ENCODE measurements at regions of chr9 and their contacts with region 1.

Region 1: DNA sequence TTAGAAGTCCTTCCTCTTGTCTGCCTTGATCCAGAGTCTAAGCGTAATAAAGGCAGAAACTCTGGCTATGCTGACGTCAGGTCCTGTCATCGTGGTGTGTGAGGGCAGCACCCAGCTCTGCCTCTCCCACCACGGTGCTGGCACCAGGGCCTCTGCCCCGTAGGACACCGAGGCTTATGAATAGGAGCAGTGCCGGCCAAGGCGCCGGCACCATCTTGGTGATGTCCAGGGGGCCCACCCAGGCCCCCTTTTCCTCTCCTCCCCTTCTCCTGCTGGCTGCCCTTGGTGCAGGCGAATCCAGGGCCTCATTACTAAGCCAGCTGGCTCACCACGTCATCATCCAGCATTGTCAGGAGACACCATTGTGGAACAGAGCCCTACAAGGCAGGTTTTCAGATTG is 252.3 kb downstream of the FANCC start:
- DNase-seq: no peak
- ATAC-seq: no peak
- H3K4me3 ChIP-seq: no peak overlapping the region
- H3K27ac ChIP-seq: peak overlapping the region; percentile 91
- H3K4me1 ChIP-seq: peaks cover 93% of the 10 kb centered on the region
- H3K27me3 ChIP-seq: no peaks in the 10 kb centered on the region
- CTCF ChIP-seq: no peak
- EP300 ChIP-seq: no peak
- POLR2A ChIP-seq: no peak
- RAD21 ChIP-seq: no peak

Region 2: GRCh38 chr9:94961870-94962269 is 103.4 kb before region 1 on chr9:
- CTCF ChIA-PET with region 1: no interaction called
- POLR2A ChIA-PET with region 1: no interaction called
- in situ Hi-C with region 1: no loop called
- intact Hi-C with region 1: no loop called
- DNase-seq: no peak
- ATAC-seq: no peak
- H3K4me3 ChIP-seq: no peak overlapping the region
- H3K27ac ChIP-seq: no peak overlapping the region
- H3K4me1 ChIP-seq: peaks cover 19% of the 10 kb centered on the region
- H3K27me3 ChIP-seq: no peaks in the 10 kb centered on the region
- CTCF ChIP-seq: no peak
- EP300 ChIP-seq: no peak
- POLR2A ChIP-seq: no peak
- RAD21 ChIP-seq: no peak

Region 3: GRCh38 chr9:95025213-95026147 is 39.7 kb before region 1 on chr9:
- CTCF ChIA-PET with region 1: no interaction called
- POLR2A ChIA-PET with region 1: interaction called, 52 read pairs
- in situ Hi-C with region 1: no loop called
- intact Hi-C with region 1: loop called (anchors 2 kb)
- DNase-seq: peak; percentile 80
- ATAC-seq: peak; percentile 46
- H3K4me3 ChIP-seq: 0 out of 6 replicates have a peak overlapping the region, but pooled peaks of 1 of the 3 experiments have one; percentile 47
- H3K27ac ChIP-seq: peak overlapping the region; percentile 94
- H3K4me1 ChIP-seq: peaks cover 100% of the 10 kb centered on the region
- H3K27me3 ChIP-seq: no peaks in the 10 kb centered on the region
- CTCF ChIP-seq: peak; percentile 44
- EP300 ChIP-seq: peak; percentile 28 to 35; a peak in 1 of 4 replicates
- POLR2A ChIP-seq: 0 out of 4 replicates have a peak, but pooled peaks of 1 of the 2 experiments have one; percentile 13
- RAD21 ChIP-seq: 0 out of 2 replicates have a peak, but pooled peaks have one; percentile 40

Region 4: GRCh38 chr9:95031711-95032461 is 33.3 kb before region 1 on chr9:
- CTCF ChIA-PET with region 1: no interaction called
- POLR2A ChIA-PET with region 1: interaction called, 21 read pairs
- in situ Hi-C with region 1: no loop called
- intact Hi-C with region 1: loop called (anchors 2 kb)
- DNase-seq: peak; percentile 98
- ATAC-seq: peak; percentile 82
- H3K4me3 ChIP-seq: peak overlapping the region in 1 of 3 experiments; percentile 48; a peak in 2 of 6 replicates
- H3K27ac ChIP-seq: peak overlapping the region; percentile 85
- H3K4me1 ChIP-seq: peaks cover 76% of the 10 kb centered on the region
- H3K27me3 ChIP-seq: no peaks in the 10 kb centered on the region
- CTCF ChIP-seq: no peak
- EP300 ChIP-seq: peak in 1 of 2 experiments; percentile 97; a peak in 3 of 4 replicates
- POLR2A ChIP-seq: peak; percentile 16 to 21; a peak in 2 of 4 replicates
- RAD21 ChIP-seq: no peak

Region 5: DNA sequence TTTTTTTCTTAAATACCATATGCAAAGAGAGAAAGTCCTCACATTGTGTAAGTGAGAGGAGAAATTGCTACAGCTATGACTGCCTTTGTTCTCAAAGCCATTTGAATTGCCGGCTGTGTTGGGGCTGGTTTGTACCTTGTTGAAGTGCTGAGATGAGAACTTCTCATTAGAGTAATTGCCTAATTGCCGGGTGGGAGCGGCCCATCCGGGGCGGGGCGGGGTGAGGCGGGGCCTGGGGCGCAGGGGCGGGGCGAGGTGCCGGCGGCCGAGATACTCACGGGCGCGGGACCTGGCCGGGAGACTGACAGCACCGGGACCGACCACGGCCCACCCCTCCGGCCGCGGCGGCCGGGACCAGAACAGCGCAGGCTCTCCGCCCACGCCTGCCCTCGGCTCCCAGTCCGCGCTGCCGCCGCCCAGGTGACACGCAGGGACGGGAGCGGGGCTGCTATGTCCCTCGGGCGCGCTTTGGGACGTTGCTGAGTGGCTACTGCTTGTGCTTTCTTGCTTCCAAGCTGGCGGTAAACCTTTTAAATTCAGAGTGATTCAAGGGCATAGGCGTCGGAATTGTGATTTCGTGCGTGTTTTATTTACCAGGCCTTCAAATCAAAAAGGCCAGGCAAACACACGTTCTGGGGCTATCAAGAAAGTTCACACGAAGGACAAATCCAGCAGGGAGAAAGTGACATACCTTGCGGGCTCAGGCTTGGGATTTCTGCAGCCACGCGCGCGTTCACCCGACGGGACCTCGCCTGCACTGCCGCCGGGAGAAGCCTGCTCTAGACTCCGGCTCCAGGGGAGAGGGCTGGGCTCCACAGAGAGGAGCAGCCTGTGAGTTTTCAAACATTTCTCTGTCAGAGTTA is 16.8 kb before region 1 on chr9:
- CTCF ChIA-PET with region 1: no interaction called
- POLR2A ChIA-PET with region 1: interaction called, 12 read pairs
- in situ Hi-C with region 1: no loop called
- intact Hi-C with region 1: no loop called
- DNase-seq: peak; percentile 72
- ATAC-seq: peak; percentile 91
- H3K4me3 ChIP-seq: peak overlapping the region; percentile 60 to 77 (median 69)
- H3K27ac ChIP-seq: peak overlapping the region; percentile 88
- H3K4me1 ChIP-seq: peaks cover 70% of the 10 kb centered on the region
- H3K27me3 ChIP-seq: no peaks in the 10 kb centered on the region
- CTCF ChIP-seq: no peak
- EP300 ChIP-seq: no peak
- POLR2A ChIP-seq: peak; percentile 24 to 35; a peak in 2 of 4 replicates
- RAD21 ChIP-seq: peak; percentile 18; the same call in 1 of the 2 replicates

Measured in HepG2 (cell line).